Activated T-helper 2 cell treated with anti-CD3 and anti-CD28 coated beads, Interferon-gamma antibody, Interleukin-2, Interleukin-4, amounts not matched to agents 10 μg/mL and 5 μg/mL and 100 μg/mL, durations not matched to agents 14 hours and 24 hours and 36 hours (primary cell): ENCODE measurements at regions of chr9 and their contacts with region 1.

Region 1: GRCh38 chr9:109119439-109120203 is at the start of gene TMEM245:
- DNase-seq: peak; percentile 93
- H3K4me3 Mint-ChIP-seq: peak within 1 kb of the TSS; percentile 84
- H3K27ac Mint-ChIP-seq: peak within 1 kb of the TSS; percentile 83
- H3K4me1 Mint-ChIP-seq: peaks cover 36% of the 10 kb centered on the region
- H3K27me3 Mint-ChIP-seq: no peaks in the 10 kb centered on the region
- total RNA-seq, gene TMEM245: 24.0 and 25.8 TPM in 2 replicates

Region 2: GRCh38 chr9:108933718-108934322 is 185.8 kb before region 1 on chr9 and contains the start of gene ELP1:
- intact Hi-C with region 1: loop called (anchors 1 kb)
- DNase-seq: peak; percentile 89
- H3K4me3 Mint-ChIP-seq: peak within 1 kb of the TSS; percentile 98
- H3K27ac Mint-ChIP-seq: peak within 1 kb of the TSS; percentile 94
- H3K4me1 Mint-ChIP-seq: peaks cover 26% of the 10 kb centered on the region
- H3K27me3 Mint-ChIP-seq: no peaks in the 10 kb centered on the region
- total RNA-seq, gene ELP1: 31.7 and 32.7 TPM in 2 replicates

Region 3: GRCh38 chr9:109046346-109046745 is 73.3 kb before region 1 on chr9:
- intact Hi-C with region 1: loop called (anchors 2 kb)
- DNase-seq: no peak
- H3K4me3 Mint-ChIP-seq: no peak overlapping the region
- H3K27ac Mint-ChIP-seq: no peak overlapping the region
- H3K4me1 Mint-ChIP-seq: peaks cover 17% of the 10 kb centered on the region
- H3K27me3 Mint-ChIP-seq: no peaks in the 10 kb centered on the region